Activated CD8-positive, alpha-beta T cell treated with anti-CD3 and anti-CD28 coated beads for 36 hours (primary cell): ENCODE measurements at regions of chr9 and their contacts with region 1.

Region 1: DNA sequence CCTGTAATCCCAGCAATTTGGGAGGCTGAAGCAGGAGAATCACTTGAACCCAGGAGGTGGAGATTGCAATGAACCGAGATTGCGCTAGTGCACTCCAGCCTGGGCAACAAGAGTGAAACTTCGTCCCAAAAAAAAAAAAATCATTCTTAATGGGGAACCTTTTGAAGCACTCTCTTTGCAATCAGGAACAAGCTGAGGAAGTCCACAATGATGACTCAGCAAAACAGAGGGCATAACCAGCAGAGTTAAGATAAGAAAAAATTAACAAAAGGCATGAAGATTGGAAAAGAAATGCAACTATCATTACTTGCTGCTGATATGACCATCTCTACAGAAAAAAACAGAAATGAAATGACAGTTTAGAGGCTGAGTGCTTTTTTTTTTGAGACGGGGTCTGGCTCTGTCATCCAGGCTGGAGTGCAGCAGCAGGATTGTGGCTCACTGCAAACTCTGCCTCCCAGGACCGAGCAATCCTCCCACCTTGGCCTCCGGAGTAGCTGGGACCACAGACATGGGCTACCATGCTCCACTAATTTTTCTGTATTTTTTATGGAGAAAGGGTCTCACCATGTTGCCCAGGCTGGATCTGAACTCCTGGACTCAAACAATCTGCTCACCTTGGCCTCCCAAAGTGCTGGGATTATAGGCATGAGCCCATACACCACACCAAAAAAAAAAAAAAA is 88.0 kb downstream of the FNBP1 start:
- DNase-seq: no peak
- ATAC-seq: no peak
- H3K4me3 Mint-ChIP-seq: no peak overlapping the region
- H3K27ac Mint-ChIP-seq: peak overlapping the region; percentile 70
- H3K4me1 Mint-ChIP-seq: peaks cover 52% of the 10 kb centered on the region
- H3K27me3 Mint-ChIP-seq: no peaks in the 10 kb centered on the region
- CTCF ChIP-seq: no peak

Region 2: DNA sequence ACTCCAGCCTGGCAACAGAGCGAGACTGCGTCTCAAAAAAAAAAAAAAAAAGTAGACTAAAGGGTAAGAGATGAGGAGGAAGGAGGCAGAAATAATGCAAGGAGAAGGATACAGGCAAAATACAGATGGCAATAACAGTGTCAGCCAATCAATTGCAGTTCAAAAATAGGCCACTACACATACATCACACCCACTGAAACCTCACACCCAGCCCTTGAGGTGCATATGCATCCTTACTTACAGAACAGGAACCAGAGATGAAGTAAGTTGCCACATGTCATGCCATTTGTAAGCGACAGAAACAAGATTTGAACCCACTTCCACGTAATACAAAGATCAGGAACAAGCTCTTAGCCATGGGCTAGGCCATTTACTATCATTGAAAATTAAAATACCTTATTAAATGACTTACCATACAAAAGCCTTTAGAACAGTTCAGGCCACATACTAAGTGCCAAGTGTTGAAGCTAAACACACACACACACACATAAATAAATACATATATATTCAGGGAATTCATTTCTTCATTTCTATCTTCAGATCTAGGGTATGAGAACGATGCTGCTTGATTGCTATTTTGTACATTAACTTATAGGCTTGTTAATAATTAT is 10.4 kb before region 1 on chr9:
- CTCF ChIA-PET with region 1: interaction called, 4 read pairs
- POLR2A ChIA-PET with region 1: interaction called, 19 read pairs
- intact Hi-C with region 1: no loop called
- DNase-seq: peak; percentile 81
- ATAC-seq: peak; percentile 88
- H3K4me3 Mint-ChIP-seq: peak overlapping the region; percentile 19
- H3K27ac Mint-ChIP-seq: peak overlapping the region; percentile 81
- H3K4me1 Mint-ChIP-seq: peaks cover 53% of the 10 kb centered on the region
- H3K27me3 Mint-ChIP-seq: no peaks in the 10 kb centered on the region
- CTCF ChIP-seq: peak; percentile 28